ENCODE measurements at regions of chr1 and their contacts with region 1.

Region 1: DNA sequence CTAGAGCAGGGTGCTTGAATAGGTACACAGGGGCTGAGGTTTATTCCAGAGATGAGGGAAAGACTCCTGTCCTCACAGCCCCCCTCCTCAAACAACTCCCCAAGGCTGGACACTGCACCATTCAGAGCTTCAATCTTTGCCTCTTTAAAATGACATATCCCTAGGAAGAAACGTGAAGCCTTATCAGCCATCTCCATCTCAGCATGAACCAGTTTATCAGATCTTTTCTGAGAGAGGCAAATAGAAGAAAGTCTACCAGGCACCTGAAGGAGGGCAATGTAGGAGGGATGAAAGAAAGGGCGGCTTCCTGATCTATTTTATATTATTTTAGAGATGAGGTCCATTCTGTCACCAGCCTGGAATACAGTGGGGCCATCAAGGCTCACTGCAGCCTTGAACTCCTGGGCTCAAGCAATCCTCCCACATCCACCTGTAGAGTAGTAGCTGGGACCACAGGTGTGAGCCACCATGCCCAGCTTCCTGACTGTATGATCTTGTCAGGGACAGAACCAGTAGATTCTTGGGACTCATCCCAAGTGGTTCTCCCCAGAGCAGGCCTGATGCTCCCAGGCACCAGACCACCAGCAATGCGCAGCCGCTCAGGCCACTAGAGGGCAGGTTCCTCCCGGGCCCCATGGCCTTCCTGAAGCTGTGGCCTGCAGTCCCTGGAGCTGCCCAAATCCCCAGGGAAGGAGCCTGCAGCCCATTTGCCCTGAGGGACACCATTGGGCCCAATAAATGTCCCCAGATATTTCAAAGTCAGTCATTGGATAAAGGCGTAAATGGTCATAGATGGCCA is 44.4 kb upstream of the GOLT1A start:
- DNase-seq: peak; percentile 20
- H3K4me3 ChIP-seq: no peak overlapping the region
- H3K27ac ChIP-seq: no peak overlapping the region
- H3K27me3 ChIP-seq: no peaks in the 10 kb centered on the region
- CTCF ChIP-seq: peak; percentile 89

Region 2: DNA sequence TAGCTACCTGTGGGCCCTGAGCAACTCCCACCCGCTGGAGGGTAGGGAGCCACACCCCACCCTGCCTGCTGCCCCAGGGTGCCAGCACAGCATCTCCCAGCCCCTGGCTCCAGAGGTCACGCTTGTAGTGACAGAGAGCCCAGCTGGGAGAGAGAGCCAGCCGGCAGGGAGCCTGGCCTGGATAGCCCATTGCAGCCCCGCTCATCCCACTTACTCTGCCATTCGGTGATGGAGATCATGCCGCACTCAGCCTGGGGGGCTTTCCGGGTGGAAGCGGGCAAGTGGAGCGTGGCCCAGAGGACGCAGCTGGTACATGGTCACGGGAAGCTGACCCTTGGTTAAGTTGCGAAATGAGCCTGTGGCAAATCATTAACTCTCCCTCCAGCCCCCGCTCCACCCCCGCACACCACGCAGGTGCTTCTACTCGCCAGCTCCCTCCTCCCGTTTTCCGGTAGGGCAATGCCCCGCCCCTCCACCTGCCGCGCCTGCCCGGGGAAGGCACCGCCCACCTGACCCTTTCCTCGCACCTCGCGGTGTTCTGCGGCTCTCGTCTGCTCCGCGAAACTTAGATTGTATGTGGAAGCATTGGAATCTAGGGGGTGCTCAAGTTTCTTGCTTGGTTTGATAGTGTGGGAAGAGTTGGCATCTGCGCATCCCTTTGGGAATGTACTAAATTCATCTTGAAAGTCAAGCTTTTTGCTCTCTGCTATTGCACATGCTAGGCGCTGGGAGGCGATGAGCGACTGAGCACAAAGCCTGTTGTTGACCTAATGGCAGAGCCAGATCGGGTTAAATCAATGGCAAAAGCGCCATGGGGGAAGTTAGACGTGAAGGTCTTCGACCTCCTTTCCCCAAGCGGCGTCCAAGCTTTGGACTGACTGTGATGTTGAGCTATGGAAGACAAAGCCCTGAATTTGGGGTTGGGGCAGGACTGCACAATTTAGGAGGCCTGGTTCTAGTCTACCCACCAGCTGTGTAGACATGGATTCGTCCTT is 44.2 kb before region 1 on chr1 and contains the start of gene GOLT1A:
- CTCF ChIA-PET with region 1: interaction called, 23 read pairs
- POLR2A ChIA-PET with region 1: no interaction called
- DNase-seq: peak; percentile 65
- H3K4me3 ChIP-seq: peak within 1 kb of the TSS; percentile 31
- H3K27ac ChIP-seq: no peak within 1 kb of the TSS
- H3K27me3 ChIP-seq: peaks cover 3% of the 10 kb centered on the region
- CTCF ChIP-seq: peak; percentile 90
- polyA plus RNA-seq, gene GOLT1A: not detected in 2 replicates

Region 3: GRCh38 chr1:204278254-204278653 is 20.1 kb after region 1 on chr1:
- CTCF ChIA-PET with region 1: interaction called, 13 read pairs
- POLR2A ChIA-PET with region 1: no interaction called
- DNase-seq: no peak
- H3K4me3 ChIP-seq: no peak overlapping the region
- H3K27ac ChIP-seq: no peak overlapping the region
- H3K27me3 ChIP-seq: peaks cover 10% of the 10 kb centered on the region
- CTCF ChIP-seq: no peak

Region 4: DNA sequence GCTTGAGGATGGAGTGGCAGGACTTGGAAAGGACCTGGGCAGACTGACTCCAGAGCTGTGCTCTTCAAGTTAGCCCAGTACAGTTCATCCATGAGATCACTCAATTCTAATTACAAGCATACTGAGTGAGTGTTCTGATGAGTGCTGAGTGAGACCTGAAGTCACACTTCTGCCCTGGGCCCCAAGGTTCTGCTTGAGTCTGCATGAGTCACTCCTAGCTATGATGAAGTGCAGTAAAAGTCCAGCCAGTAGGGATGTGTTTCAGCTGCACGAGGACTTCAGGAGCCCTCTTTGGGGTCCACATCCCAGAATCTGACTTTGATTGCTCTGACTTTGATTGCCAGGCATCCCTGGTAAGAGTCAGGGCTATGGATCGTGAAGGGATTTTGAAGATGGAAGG is 65.7 kb after region 1 on chr1:
- CTCF ChIA-PET with region 1: interaction called, 13 read pairs
- POLR2A ChIA-PET with region 1: no interaction called
- DNase-seq: no peak
- H3K4me3 ChIP-seq: no peak overlapping the region
- H3K27ac ChIP-seq: no peak overlapping the region
- H3K27me3 ChIP-seq: no peaks in the 10 kb centered on the region
- CTCF ChIP-seq: no peak

Region 5: DNA sequence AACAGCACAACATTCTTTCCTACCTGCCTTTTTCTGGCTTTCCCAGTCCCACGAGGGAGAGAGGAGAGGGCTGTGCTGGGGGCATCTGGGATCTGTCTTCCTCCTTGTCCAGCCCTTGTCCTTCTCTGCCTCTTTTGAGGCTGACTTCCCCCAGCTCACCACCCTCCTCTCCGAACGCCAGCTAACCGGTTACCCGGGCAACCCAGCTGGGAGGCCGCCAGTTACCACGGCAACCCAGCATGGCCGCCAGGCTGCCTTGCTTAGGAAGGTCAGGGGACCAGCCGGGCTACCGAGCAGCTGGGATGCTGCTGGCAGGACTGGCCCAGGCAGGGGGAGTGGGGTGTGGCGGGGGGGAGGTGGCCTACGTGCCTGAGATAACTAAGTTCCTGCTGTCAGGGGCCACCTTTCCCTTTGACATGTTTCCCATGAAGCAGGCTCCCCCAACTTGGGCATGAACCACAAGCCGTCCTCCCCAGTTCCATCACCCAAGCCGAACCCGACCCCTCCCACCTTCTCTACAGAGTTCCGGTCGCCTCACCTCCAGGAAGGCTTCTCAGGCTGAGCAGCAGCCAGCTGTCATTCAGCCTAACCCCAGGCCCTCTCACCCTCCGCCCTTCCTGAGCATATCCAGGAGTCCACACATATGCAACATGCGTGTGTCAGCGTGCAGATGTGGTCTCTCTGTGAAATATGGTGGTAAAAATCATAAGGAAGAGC is 92.9 kb after region 1 on chr1:
- CTCF ChIA-PET with region 1: interaction called, 12 read pairs
- POLR2A ChIA-PET with region 1: no interaction called
- DNase-seq: peak; percentile 59
- H3K4me3 ChIP-seq: peak overlapping the region; percentile 59
- H3K27ac ChIP-seq: no peak overlapping the region
- H3K27me3 ChIP-seq: no peaks in the 10 kb centered on the region
- CTCF ChIP-seq: no peak

Region 6: GRCh38 chr1:204453141-204453772 is 195.1 kb after region 1 on chr1:
- CTCF ChIA-PET with region 1: no interaction called
- POLR2A ChIA-PET with region 1: no interaction called
- DNase-seq: no peak
- H3K4me3 ChIP-seq: no peak overlapping the region
- H3K27ac ChIP-seq: no peak overlapping the region
- H3K27me3 ChIP-seq: no peaks in the 10 kb centered on the region
- CTCF ChIP-seq: no peak

Measured in AG04450 (cell line).